AG04449 (cell line): ENCODE measurements at regions of chr17 and their contacts with region 1.

Region 1: DNA sequence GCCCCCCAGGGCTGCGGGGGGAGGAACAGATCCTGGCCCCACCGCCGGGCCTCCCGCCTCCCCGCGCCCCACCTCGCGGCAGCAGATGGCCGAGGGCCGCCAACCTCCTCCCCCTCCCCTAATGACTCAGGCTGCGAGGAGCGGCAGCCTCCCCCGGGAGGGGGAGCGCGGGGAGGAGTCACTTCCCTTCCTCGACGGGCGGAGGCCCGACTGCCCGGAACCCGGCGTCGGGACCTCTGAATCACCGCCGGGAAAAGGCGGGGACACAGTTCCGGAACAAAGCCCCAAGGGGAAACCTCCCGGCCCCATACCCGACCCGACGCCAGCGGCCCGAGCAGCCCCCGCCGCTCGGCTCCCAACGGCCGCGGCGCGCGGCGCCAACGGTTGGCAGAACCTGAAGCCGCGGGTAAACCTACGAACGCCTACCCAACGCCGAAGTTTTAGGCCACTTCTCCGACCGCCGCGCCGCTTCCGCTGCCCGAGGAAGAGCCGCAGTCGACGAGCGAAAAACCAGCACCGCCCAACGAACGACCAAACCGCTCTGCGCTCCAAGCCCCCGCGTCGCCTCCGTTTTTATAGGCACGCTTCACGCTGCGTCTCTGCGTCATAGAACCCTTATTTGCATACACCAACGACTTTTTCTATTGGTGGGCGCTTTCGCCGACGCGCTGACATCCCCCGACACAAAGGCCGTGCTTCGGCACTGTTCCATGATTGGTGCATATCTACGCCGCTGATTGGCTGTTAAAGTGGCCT is 5.2 kb upstream of the UNK start:
- DNase-seq: peak; percentile 98
- H3K4me3 ChIP-seq: peak overlapping the region; percentile 93
- CTCF ChIP-seq: no peak

Region 2: DNA sequence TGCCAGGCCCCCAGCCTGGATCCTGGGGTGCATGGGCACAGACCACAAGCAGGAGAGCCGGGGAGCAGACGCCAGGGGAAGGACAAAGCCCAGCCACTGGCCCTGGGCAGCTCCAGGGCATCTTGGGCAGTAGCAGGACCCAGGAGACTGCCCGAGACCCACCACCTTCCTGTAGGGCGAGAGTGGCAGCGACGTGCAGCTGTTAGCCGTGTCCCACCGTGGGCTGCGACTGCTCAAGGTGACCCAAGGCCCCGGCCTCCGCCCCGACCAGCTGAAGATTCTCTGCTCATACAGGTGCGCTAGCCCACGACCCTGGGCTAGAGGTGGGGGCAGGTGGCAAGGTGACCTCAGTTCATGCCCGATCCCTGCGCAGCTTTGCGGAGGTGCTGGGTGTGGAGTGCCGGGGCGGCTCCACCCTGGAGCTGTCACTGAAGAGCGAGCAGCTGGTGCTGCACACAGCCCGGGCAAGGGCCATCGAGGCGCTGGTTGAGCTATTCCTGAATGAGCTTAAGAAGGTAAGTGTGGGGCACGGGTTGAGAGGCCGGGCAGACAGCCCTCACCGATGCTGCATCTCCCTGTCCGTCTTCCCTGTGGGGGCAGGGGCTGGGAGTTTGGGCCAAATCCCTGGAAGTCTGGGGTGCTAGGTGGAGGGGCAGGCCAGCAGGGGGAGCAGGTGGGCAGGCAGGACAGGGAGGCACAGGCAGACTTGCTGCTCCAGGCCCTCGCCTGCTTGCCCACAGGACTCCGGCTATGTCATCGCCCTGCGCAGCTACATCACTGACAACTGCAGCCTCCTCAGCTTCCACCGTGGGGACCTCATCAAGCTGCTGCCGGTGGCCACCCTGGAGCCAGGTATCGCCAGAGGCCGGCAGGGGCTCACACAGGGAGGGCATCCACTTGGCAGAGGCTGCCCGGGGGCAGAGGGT is 159.6 kb before region 1 on chr17:
- CTCF ChIA-PET with region 1: no interaction called
- POLR2A ChIA-PET with region 1: no interaction called
- DNase-seq: no peak
- H3K4me3 ChIP-seq: no peak overlapping the region
- CTCF ChIP-seq: peak; percentile 78

Region 3: GRCh38 chr17:75764711-75765421 is 14.5 kb before region 1 on chr17 and contains the start of gene GALK1:
- CTCF ChIA-PET with region 1: interaction called, 47 read pairs
- POLR2A ChIA-PET with region 1: interaction called, 69 read pairs
- DNase-seq: no peak
- H3K4me3 ChIP-seq: peak within 1 kb of the TSS; percentile 66
- CTCF ChIP-seq: peak; percentile 77

Region 4: GRCh38 chr17:75914643-75915267 is 135.3 kb after region 1 on chr17:
- CTCF ChIA-PET with region 1: no interaction called
- POLR2A ChIA-PET with region 1: no interaction called
- DNase-seq: no peak
- H3K4me3 ChIP-seq: no peak overlapping the region
- CTCF ChIP-seq: no peak